ENCODE measurements at regions of chr19 and their contacts with region 1.

Region 1: DNA sequence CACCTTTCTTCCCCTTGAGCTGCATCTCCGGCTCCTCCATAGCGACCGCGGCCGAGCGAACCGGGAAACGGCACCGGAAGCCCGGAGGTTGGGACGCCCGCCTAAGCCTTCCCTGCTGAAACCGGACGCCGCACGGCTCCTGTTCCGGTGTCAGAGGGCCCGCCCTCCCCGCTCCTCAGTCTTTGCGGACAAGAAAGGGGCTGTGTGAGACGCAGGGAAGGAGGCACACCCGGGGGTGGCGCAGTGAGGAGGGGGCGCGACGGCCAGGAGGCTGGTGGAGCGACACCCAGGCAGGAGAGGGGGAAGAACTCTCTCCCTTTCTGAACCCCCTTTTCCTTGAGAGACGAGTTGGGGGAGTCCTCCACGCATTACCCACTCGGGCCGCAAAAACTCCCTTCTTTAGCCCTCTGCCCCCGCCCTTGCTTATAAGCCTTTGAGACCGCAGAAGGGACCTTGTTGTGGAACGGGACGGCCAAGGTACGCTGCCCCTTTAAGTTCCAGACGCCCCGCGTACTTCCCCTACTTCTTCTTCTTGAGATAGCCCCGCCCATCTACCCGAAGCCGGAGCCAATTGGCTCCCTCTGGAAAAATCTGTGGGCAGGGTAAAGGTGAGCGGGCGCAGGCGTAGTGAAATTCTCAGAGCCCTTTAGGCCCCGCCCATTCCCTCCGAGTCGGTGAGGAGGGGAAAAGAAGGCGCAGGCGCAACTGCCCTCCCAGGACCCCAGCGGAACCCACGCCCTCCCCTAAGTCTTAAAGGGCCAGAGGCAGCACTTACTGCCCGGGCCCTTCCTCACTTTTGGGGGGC is at the starts of genes BORCS8 and RFXANK:
- DNase-seq: peak; percentile 99
- H3K4me3 Mint-ChIP-seq: peak within 1 kb of the TSS; percentile 96
- H3K27ac Mint-ChIP-seq: peak within 1 kb of the TSS; percentile 99
- H3K4me1 Mint-ChIP-seq: peaks cover 20% of the 10 kb centered on the region
- H3K27me3 Mint-ChIP-seq: no peaks in the 10 kb centered on the region
- total RNA-seq, gene BORCS8: 37.8 and 38.6 TPM in 2 replicates
- total RNA-seq, gene RFXANK: 101 and 103 TPM in 2 replicates

Region 2: GRCh38 chr19:18557474-18558201 is 634.6 kb before region 1 on chr19 and contains the start of gene KXD1:
- intact Hi-C with region 1: loop called (anchors 5 kb)
- DNase-seq: peak; percentile 98
- H3K4me3 Mint-ChIP-seq: peak within 1 kb of the TSS; percentile 93
- H3K27ac Mint-ChIP-seq: peak within 1 kb of the TSS; percentile 92
- H3K4me1 Mint-ChIP-seq: peaks cover 20% of the 10 kb centered on the region
- H3K27me3 Mint-ChIP-seq: no peaks in the 10 kb centered on the region
- total RNA-seq, gene KXD1: 128 and 133 TPM in 2 replicates

Region 3: GRCh38 chr19:19063183-19064097 is 128.8 kb before region 1 on chr19 and contains the start of gene SLC25A42:
- intact Hi-C with region 1: loop called (anchors 1 kb)
- DNase-seq: peak; percentile 99
- H3K4me3 Mint-ChIP-seq: peak within 1 kb of the TSS; percentile 84
- H3K27ac Mint-ChIP-seq: peak within 1 kb of the TSS; percentile 62
- H3K4me1 Mint-ChIP-seq: peaks cover 29% of the 10 kb centered on the region
- H3K27me3 Mint-ChIP-seq: no peaks in the 10 kb centered on the region
- total RNA-seq, gene SLC25A42: 7.8 and 10.8 TPM in 2 replicates

Region 4: GRCh38 chr19:19145684-19146608 is 46.3 kb before region 1 on chr19:
- intact Hi-C with region 1: no loop called
- DNase-seq: peak; percentile 80
- H3K4me3 Mint-ChIP-seq: no peak overlapping the region
- H3K27ac Mint-ChIP-seq: no peak overlapping the region
- H3K4me1 Mint-ChIP-seq: no peaks in the 10 kb centered on the region
- H3K27me3 Mint-ChIP-seq: no peaks in the 10 kb centered on the region

Region 5: GRCh38 chr19:19203012-19203856 is 11.0 kb after region 1 on chr19 and contains the start of gene NR2C2AP:
- intact Hi-C with region 1: loop called (anchors 1 kb)
- DNase-seq: peak; percentile 90
- H3K4me3 Mint-ChIP-seq: peak within 1 kb of the TSS; percentile 95
- H3K27ac Mint-ChIP-seq: peak within 1 kb of the TSS; percentile 89
- H3K4me1 Mint-ChIP-seq: peaks cover 20% of the 10 kb centered on the region
- H3K27me3 Mint-ChIP-seq: peaks cover 2% of the 10 kb centered on the region
- total RNA-seq, gene NR2C2AP: 50.9 and 52.0 TPM in 2 replicates

Region 6: GRCh38 chr19:19304186-19304965 is 112.1 kb after region 1 on chr19:
- intact Hi-C with region 1: no loop called
- DNase-seq: no peak
- H3K4me3 Mint-ChIP-seq: no peak overlapping the region
- H3K27ac Mint-ChIP-seq: peak overlapping the region; percentile 7
- H3K4me1 Mint-ChIP-seq: no peaks in the 10 kb centered on the region
- H3K27me3 Mint-ChIP-seq: no peaks in the 10 kb centered on the region

Region 7: GRCh38 chr19:19385108-19385899 is 193.0 kb after region 1 on chr19:
- intact Hi-C with region 1: loop called (anchors 5 kb)
- DNase-seq: peak; percentile 100
- H3K4me3 Mint-ChIP-seq: peak overlapping the region; percentile 87
- H3K27ac Mint-ChIP-seq: peak overlapping the region; percentile 92
- H3K4me1 Mint-ChIP-seq: peaks cover 45% of the 10 kb centered on the region
- H3K27me3 Mint-ChIP-seq: peaks cover 2% of the 10 kb centered on the region

Region 8: GRCh38 chr19:19515764-19516519 is 323.7 kb after region 1 on chr19 and contains the start of gene NDUFA13:
- intact Hi-C with region 1: loop called (anchors 1 kb)
- DNase-seq: peak; percentile 93
- H3K4me3 Mint-ChIP-seq: peak within 1 kb of the TSS; percentile 92
- H3K27ac Mint-ChIP-seq: peak within 1 kb of the TSS; percentile 94
- H3K4me1 Mint-ChIP-seq: peaks cover 9% of the 10 kb centered on the region
- H3K27me3 Mint-ChIP-seq: no peaks in the 10 kb centered on the region
- total RNA-seq, gene NDUFA13: 408 and 410 TPM in 2 replicates

Measured in activated T-helper 1 cell treated with anti-CD3 and anti-CD28 coated beads, Interleukin-12 subunit alpha, Interleukin-12 subunit beta, Interleukin-2, Interleukin-4 antibody, amounts not matched to agents 30 ng/mL and 10 ng/mL and 1 ng/mL, durations not matched to agents 14 hours and 24 hours and 36 hours (primary cell).